Mammary epithelial cell (primary cell): ENCODE measurements at regions of chr16 and their contacts with region 1.

Region 1: DNA sequence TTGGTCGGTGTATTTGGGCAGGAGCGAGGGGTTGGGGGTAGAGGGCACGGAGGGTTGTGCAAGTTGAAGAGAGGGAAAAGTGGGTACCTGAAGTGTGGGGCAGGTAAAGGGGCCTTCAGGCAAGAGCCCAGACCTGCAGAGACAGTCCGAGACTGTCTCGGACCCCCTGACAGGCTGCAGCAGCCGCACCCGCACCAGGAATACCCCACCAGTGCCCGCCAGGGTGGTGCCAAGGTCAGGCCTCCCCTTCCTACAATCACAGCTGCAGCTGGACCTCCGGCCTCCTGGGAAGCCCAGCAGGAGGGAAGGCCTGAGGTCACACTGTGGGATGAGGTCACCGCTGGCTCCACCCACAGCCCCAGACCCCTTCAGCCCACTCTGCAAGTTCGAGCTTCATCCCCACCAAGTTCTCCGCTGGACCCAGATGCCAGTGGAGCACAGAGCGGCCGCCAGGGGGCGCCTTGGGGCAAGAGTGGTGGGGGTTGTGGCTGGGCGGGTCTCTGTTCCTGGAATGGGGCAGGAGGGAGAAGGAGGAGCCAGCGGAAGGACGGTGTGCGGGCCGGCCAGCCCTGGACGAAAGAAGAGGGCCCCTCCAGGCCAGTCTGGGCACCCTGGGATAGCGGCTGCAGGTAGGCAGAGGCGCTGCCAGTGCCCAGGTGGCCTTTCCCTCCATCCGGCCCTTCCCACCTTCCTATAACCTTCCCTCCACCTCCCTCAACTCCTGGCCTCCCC is at the start of gene HSD3B7:
- DNase-seq: peak; percentile 64
- H3K4me3 ChIP-seq: peak within 1 kb of the TSS; percentile 22 to 54 (median 44)
- H3K27ac ChIP-seq: no peak within 1 kb of the TSS
- H3K4me1 ChIP-seq: peaks cover 12% of the 10 kb centered on the region
- H3K27me3 ChIP-seq: no peaks in the 10 kb centered on the region
- CTCF ChIP-seq: peak; percentile 84 to 96
- total RNA-seq, gene HSD3B7: 3.8 to 3.9 TPM

Region 2: DNA sequence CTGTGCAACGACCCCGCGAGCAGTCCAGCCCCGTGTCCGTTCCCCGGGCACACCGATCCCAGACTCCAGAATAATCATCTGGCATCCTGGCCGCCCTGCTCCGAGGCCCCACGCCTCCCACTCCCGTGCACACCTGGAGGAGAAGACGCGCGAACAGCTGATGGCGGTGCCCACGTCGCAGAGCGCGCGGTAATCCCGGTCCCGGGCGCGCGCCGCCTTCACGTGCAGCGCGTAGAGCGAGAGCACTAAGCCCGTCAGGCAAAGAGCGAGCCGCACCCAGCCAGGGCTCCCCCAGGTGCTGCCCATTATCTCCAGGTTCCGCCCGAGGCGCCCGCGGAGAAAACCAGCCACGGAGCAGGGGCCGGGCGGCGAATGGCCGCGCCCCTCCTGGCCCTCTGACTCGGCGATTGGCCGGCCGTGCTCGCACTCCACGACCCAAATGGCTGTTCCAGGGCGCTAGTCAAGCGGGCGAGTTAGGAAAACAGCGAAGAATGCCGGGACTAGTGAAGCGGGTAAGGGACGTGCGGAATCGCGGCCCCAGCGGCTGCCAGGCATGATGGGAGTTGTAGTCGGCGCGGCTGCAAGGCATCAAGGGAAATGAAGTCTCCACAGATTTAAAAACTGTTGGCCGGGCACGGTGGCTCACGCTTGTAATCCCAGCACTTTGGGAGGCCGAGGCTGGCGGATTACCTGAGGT is 109.7 kb after region 1 on chr16 and contains the start of gene VKORC1:
- CTCF ChIA-PET with region 1: no interaction called
- dilution Hi-C with region 1: no loop called
- in situ Hi-C with region 1: loop called in 1 of 2 experiments (anchors 10 kb)
- intact Hi-C with region 1: loop called (anchors 1 kb)
- DNase-seq: peak; percentile 99
- H3K4me3 ChIP-seq: peak within 1 kb of the TSS; percentile 57 to 98 (median 71)
- H3K27ac ChIP-seq: peak within 1 kb of the TSS; percentile 81
- H3K4me1 ChIP-seq: peaks cover 4% of the 10 kb centered on the region
- H3K27me3 ChIP-seq: no peaks in the 10 kb centered on the region
- CTCF ChIP-seq: no peak
- total RNA-seq, gene VKORC1: 45.7 to 65.0 TPM

Region 3: GRCh38 chr16:31253642-31254045 is 268.8 kb after region 1 on chr16:
- CTCF ChIA-PET with region 1: no interaction called
- dilution Hi-C with region 1: no loop called
- in situ Hi-C with region 1: no loop called
- intact Hi-C with region 1: no loop called
- DNase-seq: no peak
- H3K4me3 ChIP-seq: no peak overlapping the region
- H3K27ac ChIP-seq: no peak overlapping the region
- H3K4me1 ChIP-seq: peaks cover 5% of the 10 kb centered on the region
- H3K27me3 ChIP-seq: no peaks in the 10 kb centered on the region
- CTCF ChIP-seq: no peak

Region 4: DNA sequence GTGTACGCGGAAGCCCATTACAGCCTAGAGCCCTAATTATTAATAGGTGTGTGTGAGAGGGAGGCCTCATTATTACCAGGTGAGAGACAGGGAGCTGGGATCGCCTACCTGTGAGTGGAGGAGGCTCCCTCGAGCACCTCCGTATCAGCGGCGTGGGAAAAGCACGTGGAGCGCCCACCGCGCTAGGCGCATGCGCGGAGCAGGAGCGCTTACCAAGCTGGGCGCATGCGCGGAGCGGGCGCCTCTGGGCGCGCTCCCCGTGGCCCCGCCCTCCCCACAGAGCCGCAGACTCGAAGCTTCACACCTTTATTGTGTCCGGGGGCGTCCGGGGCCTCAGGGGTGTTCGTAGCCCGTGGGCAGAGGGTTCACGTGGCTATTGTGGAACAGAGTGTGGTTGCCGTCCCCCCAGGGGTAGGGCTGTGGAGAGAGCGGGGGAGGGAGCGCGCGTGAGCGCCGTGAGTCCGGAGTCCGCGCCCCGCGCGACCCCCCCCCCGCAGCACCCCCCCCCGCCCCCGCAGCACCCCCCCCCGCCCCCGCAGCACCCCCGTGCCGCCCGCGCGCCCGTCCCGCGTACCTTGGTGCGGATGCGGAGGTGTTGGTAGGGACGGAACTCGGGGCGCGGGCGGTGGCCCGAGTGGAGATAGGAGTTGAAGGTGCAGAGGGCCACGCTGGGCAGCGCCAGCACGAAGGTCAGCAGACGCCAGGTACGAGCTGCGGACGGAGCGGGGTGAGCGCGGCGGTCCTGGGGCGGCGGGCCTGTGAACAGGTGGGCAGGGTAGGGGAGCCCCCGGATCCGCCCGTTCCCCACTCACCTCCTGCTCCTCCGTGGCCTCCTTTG is 442.8 kb after region 1 on chr16:
- CTCF ChIA-PET with region 1: no interaction called
- dilution Hi-C with region 1: no loop called
- in situ Hi-C with region 1: loop called in 1 of 2 experiments (anchors 25 kb)
- intact Hi-C with region 1: no loop called
- DNase-seq: no peak
- H3K4me3 ChIP-seq: peak overlapping the region in 2 of 3 experiments; percentile 24 to 26
- H3K27ac ChIP-seq: no peak overlapping the region
- H3K4me1 ChIP-seq: peaks cover 3% of the 10 kb centered on the region
- H3K27me3 ChIP-seq: peaks cover 2% of the 10 kb centered on the region
- CTCF ChIP-seq: no peak

Region 5: GRCh38 chr16:31868691-31869167 is 883.9 kb after region 1 on chr16:
- CTCF ChIA-PET with region 1: no interaction called
- dilution Hi-C with region 1: no loop called
- in situ Hi-C with region 1: loop called in 1 of 2 experiments (anchors 25 kb)
- intact Hi-C with region 1: loop called (anchors 1 kb)
- DNase-seq: peak; percentile 51
- H3K4me3 ChIP-seq: no peak overlapping the region
- H3K27ac ChIP-seq: no peak overlapping the region
- H3K4me1 ChIP-seq: peaks cover 11% of the 10 kb centered on the region
- H3K27me3 ChIP-seq: no peaks in the 10 kb centered on the region
- CTCF ChIP-seq: peak; percentile 65 to 72